ENCODE measurements at regions of chr17 and their contacts with region 1.

Region 1: DNA sequence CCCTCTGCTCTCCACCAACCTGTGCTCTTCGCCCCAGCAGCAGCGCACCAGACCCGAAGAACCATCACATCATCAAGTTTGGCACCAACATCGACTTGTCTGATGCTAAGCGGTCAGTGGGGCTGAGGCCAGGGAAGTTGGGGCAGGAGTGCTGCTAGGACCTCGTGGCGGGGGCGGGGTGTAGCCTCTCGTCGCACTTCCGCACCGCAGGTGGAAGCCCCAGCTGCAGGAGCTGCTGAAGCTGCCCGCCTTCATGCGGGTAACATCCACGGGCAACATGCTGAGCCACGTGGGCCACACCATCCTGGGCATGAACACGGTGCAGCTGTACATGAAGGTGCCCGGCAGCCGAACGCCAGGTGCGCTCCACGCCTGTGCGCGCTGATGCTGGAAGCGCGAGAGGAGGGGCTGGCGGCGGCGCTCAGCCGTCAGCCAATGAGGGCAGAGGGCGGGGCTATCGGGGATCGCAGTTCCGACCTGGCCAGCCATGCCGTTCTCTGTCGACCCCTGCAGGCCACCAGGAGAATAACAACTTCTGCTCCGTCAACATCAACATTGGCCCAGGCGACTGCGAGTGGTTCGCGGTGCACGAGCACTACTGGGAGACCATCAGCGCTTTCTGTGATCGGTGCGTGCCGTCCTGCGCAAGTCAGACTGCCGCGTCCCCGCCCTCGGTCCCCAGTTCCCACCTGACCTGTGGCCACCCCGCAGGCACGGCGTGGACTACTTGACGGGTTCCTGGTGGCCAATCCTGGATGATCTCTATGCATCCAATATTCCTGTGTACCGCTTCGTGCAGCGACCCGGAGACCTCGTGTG is 3.2 kb upstream of the TMEM88 start:
- DNase-seq: peak; percentile 96
- ATAC-seq: peak; percentile 75
- H3K4me3 Mint-ChIP-seq: peak overlapping the region; percentile 81
- H3K27ac Mint-ChIP-seq: no peak overlapping the region
- H3K4me1 Mint-ChIP-seq: peaks cover 30% of the 10 kb centered on the region
- H3K27me3 Mint-ChIP-seq: peaks cover 30% of the 10 kb centered on the region
- CTCF ChIP-seq: peak; percentile 95

Region 2: GRCh38 chr17:7834962-7835813 is 16.5 kb before region 1 on chr17:
- CTCF ChIA-PET with region 1: interaction called, 66 read pairs
- POLR2A ChIA-PET with region 1: interaction called, 8 read pairs
- DNase-seq: peak; percentile 98
- ATAC-seq: peak; percentile 60
- H3K4me3 Mint-ChIP-seq: peak overlapping the region; percentile 93
- H3K27ac Mint-ChIP-seq: peak overlapping the region; percentile 86
- H3K4me1 Mint-ChIP-seq: peaks cover 34% of the 10 kb centered on the region
- H3K27me3 Mint-ChIP-seq: peaks cover 54% of the 10 kb centered on the region
- CTCF ChIP-seq: peak; percentile 45

Region 3: DNA sequence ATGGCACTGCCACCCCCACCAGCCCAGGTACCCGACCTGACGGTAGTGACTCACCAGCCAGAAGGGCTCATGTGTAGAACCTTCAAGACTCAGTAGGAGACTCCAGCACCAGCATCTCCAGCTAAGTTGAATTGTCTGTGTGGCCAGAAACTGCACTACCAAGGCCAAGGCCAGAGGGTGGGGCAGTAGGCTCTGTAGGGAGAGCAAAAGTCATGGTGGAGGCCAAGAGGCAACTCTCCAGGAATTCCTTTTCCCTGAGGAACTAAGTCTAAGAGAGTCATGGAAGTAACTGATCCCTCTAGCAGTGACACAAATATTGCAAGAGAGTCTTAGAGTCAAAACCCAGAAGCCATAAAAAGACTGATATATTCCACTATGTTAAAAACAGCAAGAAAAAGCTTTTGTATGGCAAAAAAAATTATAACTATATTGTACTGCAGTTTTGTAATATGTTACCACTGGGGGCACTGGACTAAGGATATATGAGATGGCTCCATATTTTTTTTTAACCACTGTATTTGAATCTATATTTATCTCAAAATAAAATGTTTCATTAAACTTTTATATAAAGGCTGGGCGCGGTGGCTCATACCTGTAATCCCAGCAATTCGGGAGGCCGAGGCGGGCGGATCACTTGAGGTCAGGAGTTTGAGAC is 120.6 kb after region 1 on chr17:
- CTCF ChIA-PET with region 1: no interaction called
- POLR2A ChIA-PET with region 1: no interaction called
- DNase-seq: no peak
- ATAC-seq: no peak
- H3K4me3 Mint-ChIP-seq: no peak overlapping the region
- H3K27ac Mint-ChIP-seq: no peak overlapping the region
- H3K4me1 Mint-ChIP-seq: no peaks in the 10 kb centered on the region
- H3K27me3 Mint-ChIP-seq: peaks cover 28% of the 10 kb centered on the region
- CTCF ChIP-seq: no peak